Right ventricle myocardium inferior (tissue), 1 donor: ENCODE measurements at regions of chr6 and their contacts with region 1.

Region 1: GRCh38 chr6:149723771-149724417 is 6.0 kb upstream of the LATS1 start:
- DNase-seq: no peak
- ATAC-seq: peak; percentile 86

Region 2: DNA sequence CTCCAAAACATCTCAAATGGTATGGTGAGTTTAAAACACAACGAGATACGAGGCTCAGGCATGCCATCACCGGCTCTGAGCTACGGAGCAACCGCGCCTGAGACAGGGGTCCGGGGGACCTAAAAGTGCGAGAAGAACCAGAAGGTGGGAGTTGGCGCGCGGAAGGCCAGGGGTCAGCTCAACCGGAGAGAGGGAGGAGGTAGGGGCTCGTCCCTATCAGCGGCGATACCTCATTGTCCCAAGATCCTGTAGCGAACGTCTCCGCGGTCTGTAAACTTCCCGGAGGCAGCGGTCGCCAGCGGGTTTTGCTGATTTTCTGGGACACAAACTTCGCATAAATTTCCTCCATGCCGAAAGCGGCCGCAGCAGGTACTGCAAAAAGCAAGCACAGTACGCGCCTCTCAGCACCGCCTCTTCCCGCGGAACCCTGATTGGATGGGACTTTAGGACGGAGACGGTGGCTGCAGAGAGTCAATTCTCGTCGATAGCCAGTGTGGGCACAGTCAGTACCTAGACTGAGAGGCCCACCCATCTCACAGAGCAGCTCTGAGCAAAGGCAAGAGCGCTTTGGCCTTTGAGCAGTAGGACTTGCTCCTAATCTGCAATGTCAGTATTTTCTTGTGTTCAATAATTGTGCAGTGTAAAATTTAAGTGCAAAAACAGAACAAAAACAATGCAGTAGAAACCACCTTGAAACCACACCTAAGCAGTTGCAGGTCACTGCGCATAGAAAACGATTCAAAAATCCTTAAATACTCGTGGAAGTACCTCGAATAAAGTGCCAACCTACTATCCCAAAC is 22.5 kb after region 1 on chr6 and contains the start of gene NUP43:
- intact Hi-C with region 1: no loop called
- DNase-seq: peak; percentile 95
- ATAC-seq: peak; percentile 82
- total RNA-seq, gene NUP43: 28.1 TPM

Region 3: DNA sequence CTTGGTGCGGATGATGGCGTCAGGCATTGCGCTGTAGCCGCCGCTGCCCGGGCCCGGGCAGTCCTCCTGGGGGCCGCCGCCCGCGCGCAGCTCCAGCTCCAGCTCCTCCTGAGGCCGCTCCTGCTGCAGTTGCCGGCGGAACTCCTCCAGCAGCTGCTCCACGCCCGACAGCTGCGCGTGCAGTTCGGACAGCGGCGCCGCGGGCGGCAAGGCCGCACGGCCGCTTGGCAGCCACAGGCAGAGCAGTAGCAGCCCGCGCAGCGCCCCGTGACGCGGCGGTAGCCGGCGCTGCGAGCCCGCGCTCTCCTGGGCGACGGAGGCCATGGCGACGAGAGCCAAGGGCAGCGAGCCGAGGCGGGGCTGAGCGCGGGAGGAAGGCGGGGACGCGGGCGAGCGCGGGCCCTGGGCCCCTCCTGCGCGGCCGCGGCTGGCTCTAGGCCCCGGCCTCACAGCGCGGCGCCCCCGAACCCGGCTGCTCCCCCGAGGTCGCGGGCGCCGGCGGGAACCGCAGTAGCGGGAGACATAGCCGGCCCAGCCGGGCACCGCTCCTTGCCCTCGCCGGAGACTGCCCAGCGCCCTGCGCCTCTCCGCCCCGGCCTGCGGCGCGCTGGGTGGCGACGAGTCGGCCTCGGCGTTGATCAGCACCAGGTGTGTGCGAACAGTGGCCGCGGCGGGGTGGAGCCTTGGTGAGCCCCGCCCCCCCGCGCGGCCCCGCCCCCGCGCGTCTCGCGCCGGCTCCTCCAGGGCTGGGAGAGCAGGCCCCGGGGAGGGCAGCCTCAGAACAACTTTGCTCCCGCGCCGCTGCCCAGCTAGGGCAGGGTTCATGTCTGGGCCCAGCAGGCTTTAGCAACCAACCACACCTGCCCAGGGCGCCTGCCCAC is 140.0 kb after region 1 on chr6 and contains the start of gene LRP11:
- intact Hi-C with region 1: loop called (anchors 10 kb)
- DNase-seq: peak; percentile 92
- ATAC-seq: peak; percentile 92
- total RNA-seq, gene LRP11: 21.5 TPM